Calu3 (cell line): ENCODE measurements at regions of chr19 and their contacts with region 1.

Region 1: GRCh38 chr19:55117636-55118391 is at the start of gene PPP1R12C:
- DNase-seq: peak; percentile 99
- H3K4me3 Mint-ChIP-seq: peak within 1 kb of the TSS; percentile 83
- H3K27ac Mint-ChIP-seq: peak within 1 kb of the TSS; percentile 84
- H3K4me1 Mint-ChIP-seq: peaks cover 22% of the 10 kb centered on the region
- H3K27me3 Mint-ChIP-seq: peaks cover 6% of the 10 kb centered on the region
- CTCF ChIP-seq: no peak
- total RNA-seq, gene PPP1R12C: 140 and 151 TPM in 2 replicates

Region 2: DNA sequence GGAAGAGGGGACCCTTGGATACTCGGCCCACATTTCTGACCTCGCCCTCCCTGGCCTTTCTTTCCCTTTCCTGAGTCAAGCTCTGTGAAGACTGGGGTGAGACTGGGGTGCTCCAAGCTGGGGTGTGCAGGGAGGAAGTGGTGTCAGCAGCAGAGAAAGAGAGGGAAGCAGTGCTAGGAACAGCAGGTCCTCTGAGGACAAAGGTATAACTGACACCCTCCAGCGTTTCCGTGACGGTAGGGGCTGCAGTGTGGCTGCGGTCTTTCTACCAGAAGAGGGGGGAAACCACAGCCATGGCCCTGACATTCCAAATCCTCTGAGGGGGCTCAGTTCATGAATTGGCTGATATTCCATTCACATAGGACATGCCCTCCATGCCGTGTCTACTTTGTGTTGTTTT is 266.5 kb before region 1 on chr19:
- CTCF ChIA-PET with region 1: no interaction called
- intact Hi-C with region 1: no loop called
- DNase-seq: no peak
- H3K4me3 Mint-ChIP-seq: no peak overlapping the region
- H3K27ac Mint-ChIP-seq: no peak overlapping the region
- H3K4me1 Mint-ChIP-seq: no peaks in the 10 kb centered on the region
- H3K27me3 Mint-ChIP-seq: peaks cover 67% of the 10 kb centered on the region
- CTCF ChIP-seq: no peak

Region 3: DNA sequence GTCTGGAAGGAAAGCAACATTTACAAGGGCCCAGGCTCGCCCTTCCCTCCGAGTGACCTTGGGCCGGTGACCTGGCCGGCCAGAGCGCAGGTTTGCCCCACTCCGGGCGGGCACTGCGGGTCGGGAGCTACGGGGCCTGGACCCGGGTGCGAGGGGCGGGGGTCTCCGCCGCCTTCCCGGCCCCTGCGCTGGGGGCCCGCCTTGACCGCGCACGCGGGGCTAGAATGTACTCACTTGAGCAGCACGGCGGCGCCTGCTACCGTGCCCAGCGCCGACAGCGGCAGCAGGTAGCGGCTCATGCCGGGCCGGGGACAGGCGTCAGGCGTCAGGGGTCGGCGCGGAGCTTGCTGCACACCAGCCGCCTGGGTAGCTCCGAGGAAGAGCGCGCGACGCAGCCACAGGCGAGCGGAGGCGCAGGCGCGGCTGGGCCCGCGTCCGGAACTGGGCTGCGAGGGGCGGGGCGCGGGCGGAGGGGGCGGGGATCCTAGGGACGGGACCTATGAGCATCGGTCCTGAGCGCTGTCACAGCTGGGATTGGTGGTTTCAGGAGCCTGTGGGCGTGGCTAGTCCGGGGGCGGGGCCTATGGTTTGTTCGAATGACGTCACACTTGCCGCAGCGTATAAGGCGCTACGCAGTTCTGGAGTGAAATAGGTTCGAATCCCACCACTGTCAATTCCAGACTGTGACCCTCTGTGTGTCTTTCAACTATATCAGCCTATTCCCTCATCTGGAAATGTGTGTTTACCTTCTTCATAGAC is 54.9 kb before region 1 on chr19 and contains the start of gene RDH13:
- CTCF ChIA-PET with region 1: no interaction called
- intact Hi-C with region 1: loop called (anchors 2 kb)
- DNase-seq: peak; percentile 99
- H3K4me3 Mint-ChIP-seq: peak within 1 kb of the TSS; percentile 72
- H3K27ac Mint-ChIP-seq: peak within 1 kb of the TSS; percentile 66
- H3K4me1 Mint-ChIP-seq: peaks cover 9% of the 10 kb centered on the region
- H3K27me3 Mint-ChIP-seq: peaks cover 13% of the 10 kb centered on the region
- CTCF ChIP-seq: no peak
- total RNA-seq, gene RDH13: 50.1 and 54.5 TPM in 2 replicates